ENCODE measurements at regions of chr17 and their contacts with region 1.

Region 1: DNA sequence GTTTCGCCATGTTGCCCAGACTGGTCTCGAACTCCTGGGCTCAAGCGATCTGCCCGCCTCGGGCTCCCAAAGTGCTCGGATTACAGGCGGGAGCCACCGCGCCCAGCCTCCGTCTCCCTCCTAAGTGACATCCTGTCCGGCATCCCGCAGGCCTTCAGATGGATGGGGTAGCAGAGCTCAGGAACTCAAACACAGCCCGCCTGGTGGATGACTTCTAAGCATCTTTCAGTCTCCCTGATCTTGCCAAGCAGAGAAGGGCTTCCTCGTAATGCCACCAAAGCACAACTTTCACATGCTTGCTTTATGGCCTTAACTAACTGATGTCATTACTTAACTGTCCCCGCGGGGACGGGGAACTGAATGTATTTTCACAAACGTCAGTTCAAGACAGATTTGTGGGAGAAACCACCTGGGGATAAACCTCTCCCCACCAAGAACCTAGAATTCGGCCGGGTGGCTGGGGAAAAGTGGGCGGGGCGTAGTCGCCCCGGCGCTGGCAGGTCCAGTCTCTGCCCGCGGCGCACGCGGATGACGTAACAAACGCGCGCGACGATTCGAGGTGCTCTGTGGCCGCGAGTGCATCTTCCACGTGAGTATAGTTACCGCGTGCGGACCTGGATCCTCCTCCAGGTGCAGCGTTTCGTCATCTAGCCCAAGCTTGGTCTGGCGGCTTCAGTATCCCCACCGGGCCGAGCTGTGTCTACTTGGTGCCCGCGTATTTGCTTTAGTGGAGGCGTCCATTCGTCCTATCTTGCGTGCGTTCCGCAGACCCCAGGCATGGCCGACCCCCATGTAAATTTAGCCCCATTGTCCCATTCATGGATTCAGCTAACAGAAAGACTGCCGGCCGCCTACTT is at the start of gene PFAS:
- DNase-seq: peak; percentile 95
- ATAC-seq: peak; percentile 83 to 91 (median 85)
- H3K4me3 ChIP-seq: peak within 1 kb of the TSS; percentile 57 to 87 (median 75)
- H3K27ac ChIP-seq: peak within 1 kb of the TSS; percentile 90 to 99 (median 94)
- H3K4me1 ChIP-seq: peaks cover 0 to 34% (median 12%) of the 10 kb centered on the region in 9 donors
- H3K27me3 ChIP-seq: no peaks in the 10 kb centered on the region
- CTCF ChIP-seq: no peak
- total RNA-seq, gene PFAS: 9.6 to 17.9 (median 13.7) TPM

Region 2: GRCh38 chr17:8222630-8223356 is 26.2 kb before region 1 on chr17:
- intact Hi-C with region 1: loop called in 6 of 10 experiments (anchors 1 to 2 kb)
- DNase-seq: peak; percentile 95
- ATAC-seq: peak; percentile 72 to 85 (median 79)
- H3K4me3 ChIP-seq: peak overlapping the region; percentile 45 to 92 (median 66)
- H3K27ac ChIP-seq: peak overlapping the region; percentile 94 to 99 (median 97)
- H3K4me1 ChIP-seq: peaks cover 7 to 68% (median 18%) of the 10 kb centered on the region in 9 donors
- H3K27me3 ChIP-seq: no peaks in the 10 kb centered on the region
- CTCF ChIP-seq: no peak

Region 3: DNA sequence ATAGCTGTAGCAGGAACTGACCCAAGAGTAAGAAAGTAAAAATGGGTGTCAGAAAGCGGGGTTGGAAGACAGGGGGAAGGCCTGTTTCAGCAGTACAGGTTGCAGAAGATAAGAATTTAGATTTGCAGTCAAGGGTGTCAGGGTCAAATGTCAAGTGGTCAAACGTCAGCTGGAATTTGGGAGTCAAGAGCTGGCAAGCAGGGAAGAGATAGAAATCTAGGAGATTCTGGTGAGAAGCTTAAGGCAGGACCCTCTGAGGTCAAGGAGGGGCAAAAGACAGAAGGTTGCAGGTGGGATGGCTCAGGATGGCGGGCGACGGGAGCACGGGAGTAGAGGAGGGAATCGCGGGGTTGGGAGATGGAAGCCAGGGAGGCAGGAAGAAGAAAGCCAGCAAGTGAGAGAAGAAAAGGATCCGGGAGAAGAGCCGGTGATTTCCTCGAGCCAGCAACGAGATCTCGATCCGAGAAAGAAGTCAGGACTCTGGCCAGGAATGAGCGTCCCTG is 45.9 kb after region 1 on chr17:
- intact Hi-C with region 1: loop called in 4 of 10 experiments (anchors 2 to 5 kb)
- DNase-seq: no peak
- ATAC-seq: peak; percentile 1 to 27 (median 6)
- H3K4me3 ChIP-seq: peak overlapping the region; percentile 10 to 87 (median 65)
- H3K27ac ChIP-seq: peak overlapping the region; percentile 81 to 99 (median 89)
- H3K4me1 ChIP-seq: peaks cover 8 to 27% (median 13%) of the 10 kb centered on the region in 9 donors
- H3K27me3 ChIP-seq: no peaks in the 10 kb centered on the region
- CTCF ChIP-seq: no peak

Region 4: DNA sequence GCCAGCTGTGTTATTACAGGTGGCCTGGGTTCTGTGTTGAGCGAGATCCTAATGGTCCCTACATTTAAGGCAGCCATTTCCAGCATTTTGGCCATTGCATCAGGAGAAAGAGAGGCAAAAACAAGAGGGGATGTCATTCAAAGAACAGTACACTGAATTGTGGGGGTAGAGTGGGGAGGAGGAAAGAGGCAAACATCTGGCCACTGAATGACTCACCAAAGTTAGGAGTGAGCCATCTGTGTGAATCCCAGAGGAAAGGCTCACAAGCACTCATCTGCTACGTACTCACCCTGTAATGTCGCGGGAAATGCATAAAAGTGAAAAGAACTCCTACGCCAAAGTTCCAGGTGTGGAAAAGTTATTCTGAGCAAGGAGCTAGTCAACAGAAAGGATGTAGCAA is 110.8 kb after region 1 on chr17:
- intact Hi-C with region 1: no loop called
- DNase-seq: peak in 1 of 2 donors; percentile 62
- ATAC-seq: peak; percentile 60 to 93 (median 88)
- H3K4me3 ChIP-seq: peak overlapping the region in 1 of 10 donors; percentile 0
- H3K27ac ChIP-seq: peak overlapping the region in 9 of 10 donors; percentile 67 to 91 (median 75)
- H3K4me1 ChIP-seq: peaks cover 0 to 57% (median 45%) of the 10 kb centered on the region in 9 donors
- H3K27me3 ChIP-seq: no peaks in the 10 kb centered on the region
- CTCF ChIP-seq: no peak

Region 5: DNA sequence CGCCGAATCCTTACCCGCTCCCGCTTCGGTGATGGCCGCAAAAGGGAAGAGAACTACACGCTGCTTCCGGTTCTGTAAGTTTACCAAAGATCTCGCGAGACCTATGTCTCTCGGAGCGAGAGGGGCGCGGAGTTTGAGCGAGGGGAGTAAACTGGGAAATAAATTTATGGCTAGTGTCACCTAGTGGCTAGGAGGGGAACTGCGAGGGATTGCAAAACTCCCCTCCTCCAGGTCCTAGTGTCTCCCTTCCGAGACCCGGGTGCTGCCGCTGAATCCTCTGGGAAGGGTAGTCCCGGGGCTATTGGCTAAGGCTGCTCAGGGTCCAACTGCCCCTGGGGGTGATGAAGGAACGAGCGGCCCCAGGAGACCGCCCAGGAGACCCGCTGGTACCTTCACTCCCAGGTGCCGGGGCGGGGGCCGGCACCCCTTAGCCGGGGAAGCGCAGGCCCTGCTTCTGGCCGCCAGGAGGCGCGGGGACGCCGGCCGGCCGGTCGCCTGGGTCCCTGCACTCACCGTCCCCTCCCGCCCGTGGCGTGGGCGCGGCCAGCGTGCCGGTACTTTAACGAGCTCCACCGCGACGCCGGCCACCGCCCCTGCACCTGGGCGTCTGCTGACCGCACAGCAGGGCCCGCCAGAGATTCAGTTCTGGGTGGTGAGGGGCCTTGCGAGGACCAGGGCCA is 134.3 kb after region 1 on chr17 and contains the start of gene RPL26:
- intact Hi-C with region 1: loop called in 1 of 10 experiments (anchors 5 kb)
- DNase-seq: peak; percentile 92 to 98
- ATAC-seq: peak; percentile 91 to 97 (median 94)
- H3K4me3 ChIP-seq: peak within 1 kb of the TSS; percentile 64 to 87 (median 77)
- H3K27ac ChIP-seq: peak within 1 kb of the TSS; percentile 46 to 90 (median 86)
- H3K4me1 ChIP-seq: peaks cover 6 to 47% (median 31%) of the 10 kb centered on the region in 9 donors
- H3K27me3 ChIP-seq: no peaks in the 10 kb centered on the region
- CTCF ChIP-seq: peak; percentile 95 to 100 (median 99)
- total RNA-seq, gene RPL26: 1,004 to 1,398 (median 1,028) TPM

Measured in heart right ventricle (tissue), 16 donors.